ENCODE measurements at regions of chr3 and their contacts with region 1.

Region 1: GRCh38 chr3:16884084-16884747 is 539 bp upstream of the PLCL2 start:
- DNase-seq: peak; percentile 55
- ATAC-seq: peak; percentile 54
- H3K4me3 ChIP-seq: peak overlapping the region; percentile 94
- H3K27ac ChIP-seq: peak overlapping the region; percentile 12
- H3K4me1 ChIP-seq: peaks cover 34% of the 10 kb centered on the region
- H3K27me3 ChIP-seq: no peaks in the 10 kb centered on the region
- CTCF ChIP-seq: peak; percentile 70

Region 2: DNA sequence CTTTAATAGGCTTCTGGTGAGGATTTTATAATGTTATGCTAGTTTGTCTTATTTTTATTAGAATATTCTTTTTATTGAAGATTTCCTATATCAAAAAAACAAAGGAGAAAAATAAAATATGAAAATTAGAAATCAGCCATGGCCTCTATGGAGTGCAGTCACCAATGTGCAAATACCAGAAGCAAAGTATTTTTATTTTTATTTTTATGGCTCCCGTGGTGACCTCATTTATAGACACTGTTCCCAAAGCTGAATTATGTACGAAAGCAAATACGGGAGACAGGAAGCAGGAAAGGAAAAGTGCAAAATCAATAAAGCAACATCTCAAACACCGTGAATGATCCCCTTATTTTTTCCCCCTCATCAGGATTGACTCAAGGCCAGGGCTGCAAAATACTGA is 314.1 kb before region 1 on chr3:
- CTCF ChIA-PET with region 1: no interaction called
- POLR2A ChIA-PET with region 1: interaction called, 10 read pairs
- intact Hi-C with region 1: no loop called
- DNase-seq: peak; percentile 41
- ATAC-seq: peak; percentile 96
- H3K4me3 ChIP-seq: no peak overlapping the region
- H3K27ac ChIP-seq: peak overlapping the region; percentile 40
- H3K4me1 ChIP-seq: peaks cover 7% of the 10 kb centered on the region
- H3K27me3 ChIP-seq: no peaks in the 10 kb centered on the region
- CTCF ChIP-seq: no peak

Region 3: DNA sequence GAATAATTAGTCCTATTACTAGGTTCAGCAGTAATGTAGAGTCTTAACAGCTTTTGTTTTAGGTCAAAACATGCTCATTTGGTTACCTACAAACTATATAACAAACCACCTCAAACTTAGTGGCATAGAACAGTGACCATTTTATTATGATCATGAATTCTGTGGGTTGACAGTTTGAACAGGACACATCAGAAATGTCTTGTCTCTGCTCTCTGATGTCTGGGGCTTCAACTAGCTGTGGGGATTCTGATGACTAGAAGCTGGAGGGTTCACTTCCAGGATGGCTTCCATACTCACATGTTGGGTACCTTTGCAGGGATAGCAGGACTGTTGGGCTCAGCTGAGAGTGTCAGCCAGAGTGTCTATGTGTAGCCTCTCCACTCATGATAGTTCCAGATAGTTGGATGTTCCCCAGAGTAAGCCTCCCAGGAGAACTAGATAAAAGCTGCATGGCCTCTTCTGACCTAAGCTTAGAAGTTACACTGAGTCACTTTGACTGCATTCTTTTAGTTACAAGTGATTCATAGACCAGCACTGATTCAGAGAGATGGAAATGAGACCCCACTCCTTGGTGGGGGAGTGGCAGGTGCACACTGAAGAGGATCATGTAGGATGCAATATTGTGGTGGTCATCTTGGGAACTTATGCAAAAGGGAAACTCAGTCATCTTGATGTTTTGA is 33.2 kb after region 1 on chr3:
- CTCF ChIA-PET with region 1: no interaction called
- POLR2A ChIA-PET with region 1: no interaction called
- intact Hi-C with region 1: no loop called
- DNase-seq: peak; percentile 63
- ATAC-seq: peak; percentile 79
- H3K4me3 ChIP-seq: no peak overlapping the region
- H3K27ac ChIP-seq: peak overlapping the region; percentile 58
- H3K4me1 ChIP-seq: peaks cover 22% of the 10 kb centered on the region
- H3K27me3 ChIP-seq: no peaks in the 10 kb centered on the region
- CTCF ChIP-seq: no peak

Region 4: DNA sequence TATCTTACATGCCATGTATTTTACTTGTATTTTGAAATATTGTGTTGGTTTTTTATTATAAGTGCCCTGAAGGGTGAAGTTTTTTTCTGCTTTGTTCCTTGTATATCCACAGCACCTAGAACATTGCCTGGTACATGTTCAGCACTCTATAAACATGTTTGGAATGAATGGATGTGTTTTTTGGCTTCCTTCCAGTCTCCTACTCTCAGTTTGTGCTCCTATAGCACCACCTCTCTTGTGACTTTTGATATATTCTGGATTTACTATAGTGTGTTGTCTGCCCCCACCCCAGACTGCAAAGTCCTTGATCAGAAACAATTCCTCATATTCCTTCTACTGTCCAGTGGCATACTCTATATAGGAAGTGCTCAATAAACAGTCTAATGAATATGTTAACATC is 61.1 kb after region 1 on chr3:
- CTCF ChIA-PET with region 1: interaction called, 3 read pairs
- POLR2A ChIA-PET with region 1: interaction called, 17 read pairs
- intact Hi-C with region 1: no loop called
- DNase-seq: peak; percentile 24
- ATAC-seq: no peak; the same call in 1 of the 2 replicates
- H3K4me3 ChIP-seq: no peak overlapping the region
- H3K27ac ChIP-seq: no peak overlapping the region
- H3K4me1 ChIP-seq: no peaks in the 10 kb centered on the region
- H3K27me3 ChIP-seq: no peaks in the 10 kb centered on the region
- CTCF ChIP-seq: peak; percentile 24; the same call in 1 of the 2 replicates

Region 5: DNA sequence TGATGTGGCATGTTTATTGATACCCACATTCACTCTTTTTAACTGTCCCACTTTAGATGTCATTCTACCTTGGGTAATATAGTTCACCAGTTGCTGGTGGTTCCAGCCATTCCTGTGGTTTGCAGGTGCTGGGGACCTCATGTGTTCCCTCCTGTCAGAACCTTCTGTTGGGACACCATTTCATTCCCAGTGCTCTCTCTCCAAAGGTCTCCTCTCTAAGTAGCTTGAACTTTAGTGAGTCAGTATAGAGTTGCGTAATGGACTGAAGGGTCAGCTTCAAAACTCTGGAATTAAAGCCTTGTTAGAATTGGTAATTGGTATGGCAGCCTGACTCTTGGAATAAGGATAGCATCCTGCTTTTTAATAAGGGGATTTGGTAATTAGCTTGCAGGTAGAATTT is 109.0 kb after region 1 on chr3:
- CTCF ChIA-PET with region 1: interaction called, 3 read pairs
- POLR2A ChIA-PET with region 1: no interaction called
- intact Hi-C with region 1: loop called (anchors 1 kb)
- DNase-seq: peak; percentile 55
- ATAC-seq: no peak
- H3K4me3 ChIP-seq: no peak overlapping the region
- H3K27ac ChIP-seq: no peak overlapping the region
- H3K4me1 ChIP-seq: peaks cover 36% of the 10 kb centered on the region
- H3K27me3 ChIP-seq: no peaks in the 10 kb centered on the region
- CTCF ChIP-seq: no peak

Region 6: DNA sequence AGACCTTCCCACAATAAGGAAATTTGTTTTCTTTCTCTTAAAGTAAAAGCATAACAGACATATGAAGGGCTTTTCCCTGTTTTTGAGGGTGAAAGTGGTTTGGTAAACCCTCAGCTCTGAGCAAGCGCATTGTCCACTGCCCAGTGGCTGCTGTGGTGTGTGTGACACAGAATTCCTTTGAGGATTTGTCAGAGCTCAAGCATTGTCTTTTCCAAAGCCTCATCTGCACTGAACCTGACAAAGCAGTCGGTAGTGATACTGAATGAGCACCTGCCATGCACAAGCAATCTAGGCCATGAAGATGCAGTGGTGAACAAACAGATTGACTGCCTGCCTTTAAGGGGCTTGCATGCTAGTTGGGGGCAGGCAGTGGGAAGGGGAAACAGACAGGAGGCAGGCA is 128.8 kb after region 1 on chr3:
- CTCF ChIA-PET with region 1: no interaction called
- POLR2A ChIA-PET with region 1: no interaction called
- intact Hi-C with region 1: no loop called
- DNase-seq: peak; percentile 48
- ATAC-seq: peak; percentile 90
- H3K4me3 ChIP-seq: no peak overlapping the region
- H3K27ac ChIP-seq: no peak overlapping the region
- H3K4me1 ChIP-seq: no peaks in the 10 kb centered on the region
- H3K27me3 ChIP-seq: no peaks in the 10 kb centered on the region
- CTCF ChIP-seq: no peak

Region 7: GRCh38 chr3:17039580-17039979 is 155.4 kb after region 1 on chr3:
- CTCF ChIA-PET with region 1: no interaction called
- POLR2A ChIA-PET with region 1: no interaction called
- intact Hi-C with region 1: loop called (anchors 1 kb)
- DNase-seq: peak; percentile 98
- ATAC-seq: peak; percentile 96
- H3K4me3 ChIP-seq: no peak overlapping the region
- H3K27ac ChIP-seq: peak overlapping the region; percentile 96
- H3K4me1 ChIP-seq: peaks cover 43% of the 10 kb centered on the region
- H3K27me3 ChIP-seq: no peaks in the 10 kb centered on the region
- CTCF ChIP-seq: 0 out of 2 replicates have a peak, but pooled peaks have one; percentile 16

Measured in PC-3 (cell line).